ENCODE measurements at regions of chr11 and their contacts with region 1.

Region 1: DNA sequence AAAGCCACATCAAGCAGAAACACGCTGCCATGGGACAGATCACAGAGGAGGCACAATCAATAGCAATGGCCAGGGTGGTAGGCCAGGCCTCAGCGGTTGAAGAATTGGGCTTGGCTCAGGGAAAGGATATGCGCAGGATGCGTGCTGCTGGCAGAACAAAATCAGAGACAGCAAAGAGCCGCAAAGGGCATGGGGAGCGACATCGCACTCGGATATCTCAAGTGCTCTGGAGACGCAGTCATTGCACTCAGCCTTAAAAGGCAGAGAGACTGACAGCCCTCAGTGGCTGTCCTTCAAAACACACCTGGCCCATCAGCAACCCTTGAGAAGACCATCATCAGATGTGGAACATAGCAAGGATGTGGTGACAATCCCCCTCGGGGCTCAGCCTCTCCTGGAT is 50.5 kb downstream of the CSNK2A3 start:
- DNase-seq: no peak

Region 2: GRCh38 chr11:10844356-10844755 is 458.2 kb before region 1 on chr11:
- intact Hi-C with region 1: loop called in 1 of 2 experiments (anchors 5 kb)
- DNase-seq: no peak

Region 3: GRCh38 chr11:10955616-10956015 is 346.9 kb before region 1 on chr11:
- intact Hi-C with region 1: no loop called
- DNase-seq: no peak